Mammary epithelial cell (primary cell): ENCODE measurements at regions of chr5 and their contacts with region 1.

Region 1: GRCh38 chr5:217860-218456 is at the starts of genes CCDC127 and SDHA:
- DNase-seq: peak; percentile 84
- H3K4me3 ChIP-seq: peak within 1 kb of the TSS; percentile 78 to 99 (median 99)
- H3K27ac ChIP-seq: peak within 1 kb of the TSS; percentile 69
- H3K4me1 ChIP-seq: peaks cover 15% of the 10 kb centered on the region
- H3K27me3 ChIP-seq: no peaks in the 10 kb centered on the region
- CTCF ChIP-seq: peak in 1 of 2 donors; percentile 42
- total RNA-seq, gene CCDC127: 4.5 to 7.4 TPM
- total RNA-seq, gene SDHA: 73.8 to 197 TPM

Region 2: GRCh38 chr5:42243-42642 is 175.7 kb before region 1 on chr5:
- CTCF ChIA-PET with region 1: no interaction called
- dilution Hi-C with region 1: no loop called
- in situ Hi-C with region 1: no loop called
- intact Hi-C with region 1: loop called (anchors 1 kb)
- DNase-seq: peak; percentile 19
- H3K4me3 ChIP-seq: no peak overlapping the region
- H3K27ac ChIP-seq: no peak overlapping the region
- H3K4me1 ChIP-seq: no peaks in the 10 kb centered on the region
- H3K27me3 ChIP-seq: peaks cover 4% of the 10 kb centered on the region
- CTCF ChIP-seq: peak; percentile 44 to 75

Region 3: DNA sequence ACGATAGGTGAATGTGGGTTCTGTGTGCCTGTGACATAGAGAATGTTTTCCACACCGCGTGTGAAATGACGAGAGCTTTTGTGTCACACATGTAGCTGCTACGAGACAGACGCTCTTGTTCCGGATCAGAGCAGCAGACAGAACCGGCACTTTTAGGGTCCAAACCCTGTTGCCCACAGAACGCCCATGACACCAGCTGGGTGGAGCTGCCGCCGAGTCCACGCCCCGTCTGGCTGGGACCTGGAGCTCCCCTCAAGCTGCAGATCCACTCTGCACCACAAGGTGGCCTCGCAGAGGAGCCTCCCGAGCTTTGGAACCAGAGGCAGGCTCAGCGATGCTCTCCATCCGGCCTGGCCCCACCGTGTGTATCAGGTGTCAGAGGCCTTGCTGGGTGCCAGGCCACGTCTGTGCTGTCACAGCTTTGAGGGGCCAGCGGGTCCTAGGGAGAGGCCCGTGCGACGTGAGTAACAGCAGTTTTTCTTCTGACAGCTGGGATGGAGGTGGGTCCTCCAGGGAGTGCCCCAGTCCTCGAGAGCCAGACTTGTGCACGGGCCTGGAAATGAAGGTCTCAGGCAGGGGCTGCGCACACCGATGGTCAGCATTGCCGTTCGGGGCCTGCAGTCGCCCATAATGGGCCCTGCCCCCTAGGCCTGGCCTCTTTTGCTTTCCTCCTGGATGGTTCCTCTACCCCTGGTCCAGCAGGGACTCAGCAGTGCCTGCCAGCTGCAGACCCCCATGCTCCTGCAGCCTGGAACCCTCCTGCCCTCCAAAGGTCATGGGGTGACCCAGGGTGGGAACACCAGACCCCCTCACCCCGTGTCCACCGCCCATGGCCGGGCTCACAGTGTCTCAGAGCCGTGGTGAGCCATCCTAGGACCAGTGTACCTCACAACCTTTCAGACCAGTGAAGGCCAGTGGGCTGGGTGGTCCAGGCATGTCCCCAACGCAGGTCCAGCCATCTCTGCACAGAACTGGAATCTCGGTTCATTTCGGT is 29.2 kb before region 1 on chr5:
- CTCF ChIA-PET with region 1: interaction called, 7 read pairs
- dilution Hi-C with region 1: no loop called
- in situ Hi-C with region 1: no loop called
- intact Hi-C with region 1: loop called (anchors 1 kb)
- DNase-seq: peak; percentile 70
- H3K4me3 ChIP-seq: peak overlapping the region in 1 of 3 experiments; percentile 2
- H3K27ac ChIP-seq: no peak overlapping the region
- H3K4me1 ChIP-seq: peaks cover 5% of the 10 kb centered on the region
- H3K27me3 ChIP-seq: peaks cover 6% of the 10 kb centered on the region
- CTCF ChIP-seq: peak; percentile 84 to 97

Region 4: GRCh38 chr5:270340-270739 is 52.4 kb after region 1 on chr5:
- CTCF ChIA-PET with region 1: no interaction called
- dilution Hi-C with region 1: no loop called
- in situ Hi-C with region 1: no loop called
- intact Hi-C with region 1: loop called (anchors 1 kb)
- DNase-seq: no peak
- H3K4me3 ChIP-seq: peak overlapping the region in 1 of 3 experiments; percentile 53
- H3K27ac ChIP-seq: peak overlapping the region; percentile 38
- H3K4me1 ChIP-seq: peaks cover 7% of the 10 kb centered on the region
- H3K27me3 ChIP-seq: no peaks in the 10 kb centered on the region
- CTCF ChIP-seq: no peak